Activated CD4-positive, alpha-beta T cell treated with anti-CD3 and anti-CD28 coated beads, Interleukin-2, amount 10 ng/mL, durations not matched to agents 24 days and 14 days (primary cell): ENCODE measurements at regions of chr7 and their contacts with region 1.

Region 1: GRCh38 chr7:21365866-21366624 is 61.8 kb upstream of the SP4 start:
- DNase-seq: peak; percentile 54
- H3K4me3 Mint-ChIP-seq: peak overlapping the region; percentile 41
- H3K27ac Mint-ChIP-seq: peak overlapping the region; percentile 57
- H3K4me1 Mint-ChIP-seq: peaks cover 56% of the 10 kb centered on the region
- H3K27me3 Mint-ChIP-seq: no peaks in the 10 kb centered on the region

Region 2: GRCh38 chr7:19958309-19958896 is 1407.6 kb before region 1 on chr7:
- intact Hi-C with region 1: no loop called
- DNase-seq: no peak
- H3K4me3 Mint-ChIP-seq: no peak overlapping the region
- H3K27ac Mint-ChIP-seq: no peak overlapping the region
- H3K4me1 Mint-ChIP-seq: no peaks in the 10 kb centered on the region
- H3K27me3 Mint-ChIP-seq: no peaks in the 10 kb centered on the region

Region 3: DNA sequence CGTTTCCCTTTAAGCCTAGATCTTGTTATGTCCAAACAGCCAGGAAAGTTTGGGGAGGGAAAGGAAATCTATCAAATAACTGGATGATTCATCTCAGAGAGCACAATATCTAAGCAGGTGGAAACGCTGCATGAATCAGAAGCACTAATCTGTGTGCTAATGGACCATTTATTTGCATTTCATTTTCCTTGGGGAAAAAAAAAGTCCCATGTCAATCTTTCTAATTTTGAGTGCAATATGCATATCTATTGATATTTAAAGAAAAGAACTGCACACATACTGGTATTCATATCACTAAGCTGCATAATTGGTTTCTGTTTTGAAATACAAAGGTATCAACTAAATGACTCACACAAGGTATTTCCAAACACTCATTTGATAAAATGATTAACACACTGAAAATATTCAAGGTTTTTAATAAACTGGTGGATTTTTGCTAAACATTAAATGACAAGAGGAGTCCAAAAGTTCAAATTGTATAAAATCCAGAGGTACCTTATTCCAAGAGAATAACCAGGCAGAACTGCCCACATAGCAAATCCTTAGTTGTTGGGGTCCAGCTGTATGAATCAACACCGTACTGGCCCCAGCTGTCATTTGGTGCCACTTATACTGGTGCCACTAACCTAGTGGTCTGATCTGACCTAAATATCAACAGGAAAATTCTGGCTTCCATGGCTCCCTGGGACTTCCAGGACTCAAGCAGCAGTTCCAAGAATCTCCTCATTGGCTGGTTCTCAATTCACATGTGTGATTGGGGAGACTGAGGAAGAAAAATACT is 60.4 kb before region 1 on chr7:
- intact Hi-C with region 1: loop called (anchors 2 kb)
- DNase-seq: no peak
- H3K4me3 Mint-ChIP-seq: no peak overlapping the region
- H3K27ac Mint-ChIP-seq: peak overlapping the region; percentile 43
- H3K4me1 Mint-ChIP-seq: peaks cover 15% of the 10 kb centered on the region
- H3K27me3 Mint-ChIP-seq: no peaks in the 10 kb centered on the region

Region 4: DNA sequence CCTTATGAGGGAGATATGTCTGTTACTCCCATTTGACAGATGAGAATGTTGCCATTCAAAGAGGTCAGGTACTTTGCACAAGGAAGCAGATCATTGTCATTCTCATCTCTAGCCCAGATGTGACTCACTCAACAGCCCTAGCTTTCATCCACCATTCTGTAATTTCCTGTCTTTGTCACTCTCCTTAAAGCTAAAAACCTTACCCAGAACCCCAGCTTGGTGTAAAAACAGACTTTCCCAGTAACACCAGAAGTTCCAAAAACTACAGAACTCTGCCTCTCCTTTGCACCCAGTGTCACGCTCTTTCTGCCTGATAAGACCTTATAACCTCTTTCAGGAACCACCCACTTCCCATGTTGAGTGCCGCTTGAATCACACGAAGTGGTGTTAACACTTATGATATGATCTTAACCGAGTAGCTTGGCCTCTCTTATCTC is 27.3 kb before region 1 on chr7:
- intact Hi-C with region 1: loop called (anchors 1 kb)
- DNase-seq: peak; percentile 87
- H3K4me3 Mint-ChIP-seq: peak overlapping the region; percentile 13
- H3K27ac Mint-ChIP-seq: peak overlapping the region; percentile 87
- H3K4me1 Mint-ChIP-seq: peaks cover 47% of the 10 kb centered on the region
- H3K27me3 Mint-ChIP-seq: no peaks in the 10 kb centered on the region

Region 5: GRCh38 chr7:21355406-21355874 is 10.6 kb before region 1 on chr7:
- intact Hi-C with region 1: loop called (anchors 1 kb)
- DNase-seq: peak; percentile 90
- H3K4me3 Mint-ChIP-seq: peak overlapping the region; percentile 77
- H3K27ac Mint-ChIP-seq: peak overlapping the region; percentile 97
- H3K4me1 Mint-ChIP-seq: peaks cover 76% of the 10 kb centered on the region
- H3K27me3 Mint-ChIP-seq: no peaks in the 10 kb centered on the region

Region 6: GRCh38 chr7:21383227-21384220 is 17.5 kb after region 1 on chr7:
- intact Hi-C with region 1: loop called (anchors 2 kb)
- DNase-seq: peak; percentile 66
- H3K4me3 Mint-ChIP-seq: peak overlapping the region; percentile 16
- H3K27ac Mint-ChIP-seq: peak overlapping the region; percentile 55
- H3K4me1 Mint-ChIP-seq: peaks cover 18% of the 10 kb centered on the region
- H3K27me3 Mint-ChIP-seq: no peaks in the 10 kb centered on the region

Region 7: DNA sequence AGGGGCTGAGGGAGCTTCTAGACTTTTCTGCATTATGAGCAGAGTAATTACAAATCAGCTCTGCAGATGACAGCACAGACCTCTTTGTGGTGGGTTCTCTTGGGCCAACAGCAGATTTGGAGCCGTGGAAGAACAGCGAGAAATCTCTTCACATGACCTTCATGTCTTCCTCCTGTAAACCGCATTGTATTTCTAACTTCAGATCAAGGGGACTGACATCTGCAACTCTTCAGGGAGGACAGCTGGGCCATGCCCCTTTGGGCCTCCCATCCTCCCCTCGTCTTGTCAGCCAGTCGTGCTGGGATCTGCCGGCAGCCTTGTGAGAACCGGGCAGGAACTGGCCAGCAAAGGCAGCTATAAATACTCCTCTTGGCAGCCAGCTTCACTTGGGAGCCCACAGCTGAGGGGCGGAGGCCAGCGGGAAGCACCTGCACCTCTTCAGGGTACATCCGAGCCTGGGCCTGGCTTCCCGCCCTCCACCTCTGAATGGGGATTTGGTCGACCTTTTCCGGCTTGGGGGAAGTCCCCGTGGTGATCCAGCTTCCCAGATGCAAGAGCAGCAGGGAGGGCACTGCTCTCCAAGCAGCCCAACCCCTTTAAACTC is 1079.2 kb after region 1 on chr7:
- intact Hi-C with region 1: loop called (anchors 10 kb)
- DNase-seq: no peak
- H3K4me3 Mint-ChIP-seq: no peak overlapping the region
- H3K27ac Mint-ChIP-seq: no peak overlapping the region
- H3K4me1 Mint-ChIP-seq: peaks cover 10% of the 10 kb centered on the region
- H3K27me3 Mint-ChIP-seq: peaks cover 18% of the 10 kb centered on the region